A549 (cell line): ENCODE measurements at regions of chr17 and their contacts with region 1.

Region 1: DNA sequence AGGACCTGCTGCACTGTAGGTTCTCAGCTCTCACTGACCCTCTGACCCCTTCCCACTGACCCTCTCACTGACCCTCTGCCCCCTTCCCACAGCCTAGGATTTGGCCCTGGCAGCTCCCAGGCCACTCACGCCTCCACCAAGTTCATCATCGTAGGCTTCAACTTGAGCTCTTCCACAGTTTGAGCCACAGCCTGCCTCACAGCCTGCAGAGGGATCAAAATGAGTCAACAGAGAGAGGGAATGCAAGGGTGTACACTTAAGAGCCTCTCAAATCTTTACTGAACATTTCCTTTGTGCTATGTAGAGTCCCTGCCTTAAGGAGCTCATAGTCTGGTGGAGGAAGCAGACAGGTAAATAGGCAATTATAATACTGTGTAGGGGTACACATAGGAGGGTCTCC is 12.1 kb downstream of the HEATR9 start:
- DNase-seq: no peak
- ATAC-seq: no peak; a peak in 1 of 6 replicates
- H3K4me3 ChIP-seq: no peak overlapping the region
- H3K27ac ChIP-seq: no peak overlapping the region
- H3K4me1 ChIP-seq: no peaks in the 10 kb centered on the region
- CTCF ChIP-seq: no peak
- EP300 ChIP-seq: no peak
- POLR2A ChIP-seq: no peak
- RAD21 ChIP-seq: no peak

Region 2: DNA sequence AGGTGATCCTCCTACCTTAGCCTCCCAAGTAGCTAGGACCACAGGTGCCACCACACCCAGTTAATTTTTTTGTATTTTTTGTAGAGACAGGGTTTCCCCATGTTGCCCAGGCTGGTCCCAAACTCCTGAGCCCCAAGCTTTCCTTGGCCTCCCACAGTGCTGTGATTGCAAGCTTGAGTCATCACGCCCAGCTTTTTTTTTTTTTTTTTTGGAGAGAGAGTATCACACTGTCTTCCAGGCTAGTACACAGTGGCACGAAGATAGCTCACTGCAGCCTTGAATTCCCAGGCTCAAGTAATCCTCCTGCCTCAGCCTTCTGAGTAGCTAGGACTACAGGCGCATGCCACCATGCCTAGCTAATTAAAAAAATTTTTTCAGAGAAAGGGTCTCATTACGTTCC is 15.1 kb before region 1 on chr17:
- CTCF ChIA-PET with region 1: interaction called, 14 read pairs
- POLR2A ChIA-PET with region 1: no interaction called
- DNase-seq: no peak
- ATAC-seq: peak in 1 of 2 experiments; percentile 56; a peak in 3 of 6 replicates
- H3K4me3 ChIP-seq: no peak overlapping the region
- H3K27ac ChIP-seq: no peak overlapping the region
- H3K4me1 ChIP-seq: peaks cover 6% of the 10 kb centered on the region; the same call in 2 of the 3 replicates
- CTCF ChIP-seq: no peak
- EP300 ChIP-seq: no peak
- POLR2A ChIP-seq: no peak
- RAD21 ChIP-seq: no peak